ENCODE measurements at regions of chr15 and their contacts with region 1.

Region 1: DNA sequence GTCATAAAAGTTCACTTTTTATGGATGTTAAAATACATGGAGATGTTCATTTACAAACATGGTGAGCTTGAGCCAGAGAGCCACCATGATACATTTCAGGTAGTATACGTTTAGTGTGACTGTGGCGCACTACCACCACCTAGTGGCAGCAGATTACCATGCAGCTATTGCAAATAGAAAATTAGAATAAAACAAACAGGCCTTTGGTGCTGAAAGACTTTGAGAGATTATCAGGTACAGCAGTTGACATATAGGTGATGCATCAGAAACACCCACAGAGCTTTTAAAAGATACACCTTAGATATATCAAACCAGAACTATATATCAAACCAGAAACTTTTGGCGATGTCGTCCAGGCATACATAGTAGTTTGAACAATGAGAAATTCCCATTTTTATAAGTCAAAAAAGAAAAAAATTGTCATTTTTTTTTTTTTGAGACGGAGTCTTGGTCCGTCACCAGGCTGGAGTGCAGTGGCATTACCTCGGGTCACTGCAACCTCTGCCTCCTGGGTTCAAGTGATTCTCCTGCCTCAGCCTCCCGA is 42.0 kb upstream of the ICE2 start:
- DNase-seq: peak; percentile 47
- H3K4me3 ChIP-seq: no peak overlapping the region
- H3K27ac ChIP-seq: no peak overlapping the region
- H3K27me3 ChIP-seq: no peaks in the 10 kb centered on the region
- CTCF ChIP-seq: peak; percentile 92

Region 2: DNA sequence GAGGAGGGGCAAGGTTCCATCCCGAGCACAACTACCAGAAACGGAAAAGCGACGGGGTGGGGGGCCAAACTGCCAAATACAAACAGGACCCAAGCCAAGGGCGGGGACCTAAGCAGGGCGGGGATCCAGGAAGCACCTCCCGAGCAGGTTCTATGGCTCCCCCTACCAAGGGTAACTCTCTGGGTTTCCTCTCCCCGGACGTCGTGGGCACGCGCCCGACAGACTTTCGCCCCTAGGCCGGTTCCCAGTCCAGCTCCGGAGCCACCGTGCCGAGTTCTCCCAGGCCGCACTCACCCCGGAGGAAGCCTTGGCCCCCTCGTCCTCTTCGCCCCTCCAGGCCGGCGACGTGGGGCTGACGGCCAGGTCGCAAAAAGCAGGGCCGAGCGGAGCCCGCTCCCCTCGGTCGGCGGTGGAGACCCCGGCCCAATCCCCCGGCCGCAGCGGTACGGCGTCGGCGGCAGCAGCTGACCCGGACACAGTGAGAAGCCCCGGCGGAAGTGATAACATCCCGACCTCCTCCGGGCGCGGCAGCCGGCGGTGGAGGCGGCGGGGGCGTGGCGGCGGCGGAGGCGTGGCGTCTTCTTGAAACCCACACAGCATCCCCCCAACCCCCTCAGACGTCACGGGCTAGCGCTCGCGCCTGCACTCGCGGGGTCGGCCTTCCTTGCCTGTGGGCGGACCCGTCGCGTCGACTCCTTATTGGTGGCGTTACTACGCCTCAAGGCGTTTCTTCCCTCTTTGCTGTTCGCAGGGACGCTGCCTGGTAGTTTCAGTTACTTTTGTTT is 831.9 kb before region 1 on chr15 and contains the start of gene BNIP2:
- CTCF ChIA-PET with region 1: interaction called, 15 read pairs
- POLR2A ChIA-PET with region 1: no interaction called
- DNase-seq: peak; percentile 94
- H3K4me3 ChIP-seq: peak within 1 kb of the TSS; percentile 94
- H3K27ac ChIP-seq: peak within 1 kb of the TSS; percentile 99
- H3K27me3 ChIP-seq: no peaks in the 10 kb centered on the region
- CTCF ChIP-seq: no peak
- polyA plus RNA-seq, gene BNIP2: 45.4 and 65.9 TPM in 2 replicates

Region 3: DNA sequence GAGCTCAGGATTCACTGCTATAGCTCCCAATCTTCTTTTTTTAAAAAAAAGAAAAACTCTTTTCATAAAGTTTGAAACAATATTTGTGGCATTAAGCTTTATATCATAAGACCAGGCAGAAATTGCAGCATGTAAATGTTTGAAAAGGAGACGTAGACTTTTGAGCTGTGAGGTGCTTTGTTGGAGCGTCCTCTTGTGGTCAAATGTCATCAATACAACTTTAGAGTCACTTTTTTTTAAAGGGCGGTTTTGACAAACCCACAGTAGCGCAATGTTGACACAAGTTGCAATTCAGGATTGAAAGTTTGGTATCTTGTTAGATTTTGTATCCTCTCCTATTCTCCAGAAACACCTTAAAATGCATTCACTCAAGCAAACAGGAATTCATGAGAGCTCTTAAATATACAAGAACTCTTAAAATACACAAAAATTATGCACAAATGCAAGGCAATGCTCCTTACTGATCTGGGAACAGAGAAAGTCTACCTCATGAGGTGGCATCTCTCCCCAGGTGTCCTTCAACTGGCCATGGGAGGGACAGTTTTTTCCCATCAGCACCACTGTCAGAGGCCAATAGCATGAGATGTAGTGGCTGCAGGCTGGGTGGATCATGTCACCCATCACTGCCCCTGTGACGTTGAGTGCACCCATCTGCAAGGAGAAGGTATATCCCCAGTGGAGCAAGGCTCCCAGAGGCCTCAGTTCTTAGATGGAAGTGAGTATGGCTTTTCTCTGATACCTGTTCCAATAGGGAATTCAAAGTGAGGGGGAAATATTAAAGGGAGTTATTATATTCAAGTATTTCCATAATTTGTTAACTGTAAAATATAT is 193.9 kb before region 1 on chr15:
- CTCF ChIA-PET with region 1: interaction called, 81 read pairs
- POLR2A ChIA-PET with region 1: no interaction called
- DNase-seq: peak; percentile 20
- H3K4me3 ChIP-seq: no peak overlapping the region
- H3K27ac ChIP-seq: no peak overlapping the region
- H3K27me3 ChIP-seq: peaks cover 32% of the 10 kb centered on the region
- CTCF ChIP-seq: peak; percentile 88

Region 4: GRCh38 chr15:60444289-60444912 is 76.5 kb before region 1 on chr15:
- CTCF ChIA-PET with region 1: interaction called, 13 read pairs
- POLR2A ChIA-PET with region 1: no interaction called
- DNase-seq: no peak
- H3K4me3 ChIP-seq: no peak overlapping the region
- H3K27ac ChIP-seq: no peak overlapping the region
- H3K27me3 ChIP-seq: no peaks in the 10 kb centered on the region
- CTCF ChIP-seq: peak; percentile 74

Region 5: DNA sequence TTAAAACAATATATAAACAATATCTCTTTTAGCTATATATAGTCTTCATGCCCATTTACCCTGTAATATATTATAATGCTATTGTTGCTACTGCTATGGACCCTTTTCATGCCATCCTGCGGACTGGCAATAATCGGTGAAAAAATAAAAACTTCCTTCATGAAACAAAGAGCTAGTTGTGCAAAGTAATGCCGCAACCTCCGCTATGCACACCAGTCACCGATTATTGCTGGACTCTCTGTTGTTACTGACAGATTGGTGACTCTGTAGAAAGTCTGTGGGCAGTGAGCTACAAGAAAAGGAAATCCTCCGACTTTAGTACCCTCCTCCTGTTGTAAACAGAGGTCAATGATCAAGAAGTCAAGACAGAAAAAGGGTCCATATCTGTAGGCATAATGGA is 24.0 kb before region 1 on chr15:
- CTCF ChIA-PET with region 1: interaction called, 37 read pairs
- POLR2A ChIA-PET with region 1: no interaction called
- DNase-seq: no peak
- H3K4me3 ChIP-seq: no peak overlapping the region
- H3K27ac ChIP-seq: no peak overlapping the region
- H3K27me3 ChIP-seq: no peaks in the 10 kb centered on the region
- CTCF ChIP-seq: no peak

Region 6: DNA sequence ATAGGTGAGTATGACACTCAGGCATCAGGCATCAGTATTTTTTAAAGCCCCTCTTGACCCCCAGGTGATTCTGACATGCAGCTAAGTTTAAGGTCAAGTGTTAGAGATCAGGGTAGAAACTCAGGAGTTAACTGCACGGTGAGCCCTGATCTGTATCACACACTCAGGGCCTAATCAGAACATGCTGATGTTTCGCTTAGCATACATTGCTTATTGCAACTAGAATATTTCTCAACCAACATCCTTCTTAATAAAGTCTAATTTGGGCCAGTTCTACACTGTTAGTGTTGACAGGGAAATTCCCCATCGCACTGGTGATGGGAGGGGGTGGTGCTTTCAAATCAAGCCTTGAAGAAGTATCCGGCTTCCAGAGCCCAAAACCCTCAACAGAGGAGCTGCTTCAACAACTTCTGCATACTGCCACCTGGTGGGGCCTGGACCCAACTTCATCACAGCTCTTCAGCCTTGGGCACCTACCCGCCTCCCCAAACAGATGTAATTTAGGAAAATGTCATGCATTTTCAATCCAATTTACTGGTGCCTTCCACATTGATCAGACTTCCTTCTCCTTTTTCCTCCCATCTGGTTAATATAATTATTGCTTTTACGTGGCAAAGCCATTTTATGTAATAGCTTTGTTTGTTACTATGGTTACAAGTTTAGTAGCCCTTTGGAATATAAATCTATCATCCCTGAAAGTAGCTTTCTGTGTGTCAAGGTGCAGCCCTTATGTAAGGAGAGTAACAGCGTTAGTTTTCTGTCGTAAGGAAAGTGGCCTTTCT is 396.0 kb after region 1 on chr15:
- CTCF ChIA-PET with region 1: interaction called, 15 read pairs
- POLR2A ChIA-PET with region 1: no interaction called
- DNase-seq: peak; percentile 54
- H3K4me3 ChIP-seq: no peak overlapping the region
- H3K27ac ChIP-seq: no peak overlapping the region
- H3K27me3 ChIP-seq: peaks cover 7% of the 10 kb centered on the region
- CTCF ChIP-seq: peak; percentile 83

Measured in AG04450 (cell line).